Gastrocnemius medialis (tissue), 4 donors: ENCODE measurements at regions of chr1 and their contacts with region 1.

Region 1: GRCh38 chr1:162023547-162024501 is at the start of gene OLFML2B:
- DNase-seq: peak; percentile 33 to 37
- ATAC-seq: peak; percentile 58 to 61
- H3K4me3 ChIP-seq: peak within 1 kb of the TSS; percentile 59 to 67 (median 61)
- H3K27ac ChIP-seq: peak within 1 kb of the TSS; percentile 11 to 57 (median 48)
- H3K4me1 ChIP-seq: peaks cover 15 to 21% of the 10 kb centered on the region in 2 donors
- H3K27me3 ChIP-seq: peaks cover 29 to 59% (median 46%) of the 10 kb centered on the region in 3 donors
- CTCF ChIP-seq: no peak
- POLR2A ChIP-seq: peak in 1 of 2 donors; percentile 35
- total RNA-seq, gene OLFML2B: 0.68 to 6.6 (median 2.7) TPM

Region 2: DNA sequence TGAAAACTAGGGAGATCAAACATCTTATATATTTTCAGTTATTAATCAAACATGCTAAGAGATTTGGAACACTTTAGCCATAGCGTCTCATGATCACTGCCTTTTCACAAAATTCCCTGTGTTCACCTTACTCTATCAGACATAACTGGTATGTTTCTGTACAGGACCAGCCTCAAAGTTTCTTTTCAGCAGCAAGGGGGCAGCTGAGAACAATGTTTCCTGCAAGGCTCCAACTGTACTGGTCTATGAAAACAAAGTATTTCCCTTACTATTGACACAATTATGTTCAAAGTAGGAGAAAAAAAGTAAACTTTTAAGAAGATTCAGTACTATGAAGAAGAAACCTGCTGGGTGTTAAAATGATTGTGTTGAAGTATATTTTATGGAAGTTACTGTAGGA is 159.2 kb before region 1 on chr1:
- in situ Hi-C with region 1: loop called in 1 of 4 experiments (anchors 25 kb)
- intact Hi-C with region 1: loop called (anchors 10 kb)
- DNase-seq: no peak
- ATAC-seq: no peak
- H3K4me3 ChIP-seq: no peak overlapping the region
- H3K27ac ChIP-seq: no peak overlapping the region
- H3K4me1 ChIP-seq: peaks cover 0 to 2% of the 10 kb centered on the region in 2 donors
- H3K27me3 ChIP-seq: no peaks in the 10 kb centered on the region
- CTCF ChIP-seq: peak in 2 of 5 experiments; percentile 10 to 18
- POLR2A ChIP-seq: no peak

Region 3: DNA sequence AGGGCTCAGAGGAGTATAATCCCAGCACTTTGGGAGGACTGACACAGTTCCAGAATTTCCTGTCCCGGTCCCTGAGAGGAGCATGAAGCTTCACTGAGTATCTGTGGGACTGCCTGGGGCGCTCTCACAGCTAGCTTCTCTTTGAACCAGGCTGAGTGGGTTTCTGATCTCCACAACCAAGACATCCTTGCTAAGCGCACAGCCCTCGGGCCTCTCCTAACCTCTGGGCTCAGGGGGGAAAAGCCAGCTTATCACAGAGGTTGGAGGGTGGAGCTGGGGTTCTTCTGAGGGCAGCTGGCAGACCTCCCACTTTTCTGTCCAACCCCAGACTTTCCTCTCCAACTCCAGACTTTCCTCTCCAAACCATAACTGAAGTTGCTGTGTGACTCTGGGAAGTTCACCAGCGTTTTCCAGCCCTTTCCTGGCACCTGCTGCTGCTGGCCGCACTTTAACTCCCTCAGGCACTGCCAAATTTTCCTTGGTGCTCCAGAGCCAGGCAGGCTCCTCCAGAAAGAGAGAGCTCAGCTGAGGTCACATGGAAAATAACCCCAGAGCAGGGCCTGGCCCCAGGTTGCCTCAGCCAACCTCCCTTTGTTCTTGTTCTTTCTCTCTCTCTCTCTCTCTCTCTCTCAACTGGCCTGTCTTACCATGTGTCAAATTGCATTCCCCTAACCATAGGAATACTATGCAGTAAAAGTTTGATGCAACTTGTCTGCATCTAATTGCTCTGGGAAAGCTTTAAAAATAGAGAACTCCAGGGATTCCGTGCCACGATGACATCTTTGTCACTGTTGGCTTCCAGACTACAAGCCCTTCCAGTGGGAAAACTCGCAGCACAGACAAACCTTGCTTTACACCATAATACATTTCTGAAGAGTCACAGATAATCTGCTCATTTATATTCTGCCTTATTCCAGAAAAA is 49.6 kb before region 1 on chr1:
- in situ Hi-C with region 1: no loop called
- intact Hi-C with region 1: loop called (anchors 5 kb)
- DNase-seq: peak; percentile 11 to 69
- ATAC-seq: peak; percentile 41 to 76
- H3K4me3 ChIP-seq: no peak overlapping the region
- H3K27ac ChIP-seq: peak overlapping the region in 3 of 4 donors; percentile 10 to 55 (median 33)
- H3K4me1 ChIP-seq: peaks cover 9 to 13% of the 10 kb centered on the region in 2 donors
- H3K27me3 ChIP-seq: no peaks in the 10 kb centered on the region
- CTCF ChIP-seq: no peak
- POLR2A ChIP-seq: no peak